ENCODE measurements at regions of chr11 and their contacts with region 1.

Region 1: GRCh38 chr11:13335319-13335718 is 57.7 kb downstream of the BMAL1 start:
- DNase-seq: peak; percentile 67
- ATAC-seq: no peak
- H3K4me3 ChIP-seq: no peak overlapping the region
- H3K27ac ChIP-seq: no peak overlapping the region
- H3K4me1 ChIP-seq: peaks cover 76% of the 10 kb centered on the region
- H3K27me3 ChIP-seq: no peaks in the 10 kb centered on the region
- CTCF ChIP-seq: peak; percentile 86

Region 2: GRCh38 chr11:13210424-13210823 is 124.9 kb before region 1 on chr11:
- CTCF ChIA-PET with region 1: interaction called, 11 read pairs
- POLR2A ChIA-PET with region 1: no interaction called
- intact Hi-C with region 1: no loop called
- DNase-seq: peak; percentile 82
- ATAC-seq: peak; percentile 78
- H3K4me3 ChIP-seq: no peak overlapping the region
- H3K27ac ChIP-seq: no peak overlapping the region
- H3K4me1 ChIP-seq: peaks cover 37% of the 10 kb centered on the region
- H3K27me3 ChIP-seq: no peaks in the 10 kb centered on the region
- CTCF ChIP-seq: peak; percentile 87

Region 3: DNA sequence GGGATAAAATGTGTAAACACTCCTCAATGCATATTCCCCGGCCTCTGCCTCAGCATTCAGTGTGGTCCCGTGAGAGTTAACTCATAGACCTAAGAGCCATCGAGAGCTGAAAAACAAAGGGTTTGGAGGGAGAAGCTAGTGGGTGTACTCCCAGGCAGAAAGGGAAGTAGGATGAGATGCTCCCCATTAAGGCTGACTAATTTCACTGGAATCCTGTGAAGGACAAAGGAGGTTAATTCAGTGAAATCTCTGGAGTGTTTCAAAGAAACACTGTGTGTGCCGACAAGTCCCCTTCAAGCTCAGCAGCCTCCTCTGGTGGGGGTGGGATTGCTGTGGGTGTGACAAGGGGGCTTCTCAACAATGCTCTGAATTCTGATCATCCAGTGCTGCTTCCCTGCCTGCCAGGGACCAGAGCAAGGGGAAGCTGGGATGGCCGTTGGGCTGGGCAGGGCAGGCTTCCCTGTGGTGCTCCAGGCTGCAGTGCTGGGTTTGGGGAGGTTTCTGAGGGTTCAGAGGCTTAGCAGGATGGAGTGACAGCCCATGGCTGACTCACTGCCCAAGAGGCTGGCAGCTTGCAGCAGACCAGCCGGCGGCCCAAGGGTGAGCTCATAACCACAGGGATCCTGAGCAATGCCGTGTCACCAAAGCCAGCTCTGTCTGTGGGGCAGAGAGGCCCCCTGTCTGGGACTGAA is 119.2 kb before region 1 on chr11:
- CTCF ChIA-PET with region 1: interaction called, 9 read pairs
- POLR2A ChIA-PET with region 1: interaction called, 7 read pairs
- intact Hi-C with region 1: loop called (anchors 2 kb)
- DNase-seq: peak; percentile 94
- ATAC-seq: peak; percentile 94
- H3K4me3 ChIP-seq: peak overlapping the region; percentile 48
- H3K27ac ChIP-seq: peak overlapping the region; percentile 99
- H3K4me1 ChIP-seq: peaks cover 42% of the 10 kb centered on the region
- H3K27me3 ChIP-seq: no peaks in the 10 kb centered on the region
- CTCF ChIP-seq: no peak

Region 4: GRCh38 chr11:13238879-13239514 is 96.3 kb before region 1 on chr11:
- CTCF ChIA-PET with region 1: no interaction called
- POLR2A ChIA-PET with region 1: no interaction called
- intact Hi-C with region 1: no loop called
- DNase-seq: peak; percentile 70
- ATAC-seq: peak; percentile 78
- H3K4me3 ChIP-seq: no peak overlapping the region
- H3K27ac ChIP-seq: no peak overlapping the region
- H3K4me1 ChIP-seq: peaks cover 12% of the 10 kb centered on the region
- H3K27me3 ChIP-seq: no peaks in the 10 kb centered on the region
- CTCF ChIP-seq: peak; percentile 94

Region 5: DNA sequence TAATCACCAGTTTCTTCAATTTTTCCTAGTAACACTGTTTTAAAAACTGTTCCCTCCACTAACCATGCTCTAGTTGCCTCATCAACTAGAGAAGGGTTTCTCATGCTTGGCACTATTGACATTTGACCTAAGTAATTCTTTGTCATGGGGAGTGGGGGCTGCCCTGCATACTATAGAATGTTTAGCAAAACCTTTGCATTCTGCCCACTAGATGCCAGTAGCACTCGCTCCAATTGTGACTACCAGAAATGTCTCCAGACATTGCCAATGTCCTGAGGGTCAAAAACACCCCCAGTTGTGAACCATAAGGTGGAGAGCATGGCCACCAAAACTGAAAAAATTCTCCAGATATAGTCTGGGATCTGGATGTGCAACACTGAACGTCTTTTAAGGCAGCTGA is 85.3 kb before region 1 on chr11:
- CTCF ChIA-PET with region 1: interaction called, 5 read pairs
- POLR2A ChIA-PET with region 1: no interaction called
- intact Hi-C with region 1: loop called (anchors 2 kb)
- DNase-seq: peak; percentile 48
- ATAC-seq: peak; percentile 75
- H3K4me3 ChIP-seq: no peak overlapping the region
- H3K27ac ChIP-seq: no peak overlapping the region
- H3K4me1 ChIP-seq: peaks cover 4% of the 10 kb centered on the region; the same call in 1 of the 2 replicates
- H3K27me3 ChIP-seq: no peaks in the 10 kb centered on the region
- CTCF ChIP-seq: peak; percentile 62

Region 6: GRCh38 chr11:13261591-13262061 is 73.7 kb before region 1 on chr11:
- CTCF ChIA-PET with region 1: interaction called, 3 read pairs
- POLR2A ChIA-PET with region 1: no interaction called
- intact Hi-C with region 1: loop called (anchors 2 kb)
- DNase-seq: peak; percentile 92
- ATAC-seq: peak; percentile 87
- H3K4me3 ChIP-seq: peak overlapping the region; percentile 31; the same call in 1 of the 2 replicates
- H3K27ac ChIP-seq: peak overlapping the region; percentile 85
- H3K4me1 ChIP-seq: peaks cover 27% of the 10 kb centered on the region
- H3K27me3 ChIP-seq: no peaks in the 10 kb centered on the region
- CTCF ChIP-seq: no peak

Region 7: DNA sequence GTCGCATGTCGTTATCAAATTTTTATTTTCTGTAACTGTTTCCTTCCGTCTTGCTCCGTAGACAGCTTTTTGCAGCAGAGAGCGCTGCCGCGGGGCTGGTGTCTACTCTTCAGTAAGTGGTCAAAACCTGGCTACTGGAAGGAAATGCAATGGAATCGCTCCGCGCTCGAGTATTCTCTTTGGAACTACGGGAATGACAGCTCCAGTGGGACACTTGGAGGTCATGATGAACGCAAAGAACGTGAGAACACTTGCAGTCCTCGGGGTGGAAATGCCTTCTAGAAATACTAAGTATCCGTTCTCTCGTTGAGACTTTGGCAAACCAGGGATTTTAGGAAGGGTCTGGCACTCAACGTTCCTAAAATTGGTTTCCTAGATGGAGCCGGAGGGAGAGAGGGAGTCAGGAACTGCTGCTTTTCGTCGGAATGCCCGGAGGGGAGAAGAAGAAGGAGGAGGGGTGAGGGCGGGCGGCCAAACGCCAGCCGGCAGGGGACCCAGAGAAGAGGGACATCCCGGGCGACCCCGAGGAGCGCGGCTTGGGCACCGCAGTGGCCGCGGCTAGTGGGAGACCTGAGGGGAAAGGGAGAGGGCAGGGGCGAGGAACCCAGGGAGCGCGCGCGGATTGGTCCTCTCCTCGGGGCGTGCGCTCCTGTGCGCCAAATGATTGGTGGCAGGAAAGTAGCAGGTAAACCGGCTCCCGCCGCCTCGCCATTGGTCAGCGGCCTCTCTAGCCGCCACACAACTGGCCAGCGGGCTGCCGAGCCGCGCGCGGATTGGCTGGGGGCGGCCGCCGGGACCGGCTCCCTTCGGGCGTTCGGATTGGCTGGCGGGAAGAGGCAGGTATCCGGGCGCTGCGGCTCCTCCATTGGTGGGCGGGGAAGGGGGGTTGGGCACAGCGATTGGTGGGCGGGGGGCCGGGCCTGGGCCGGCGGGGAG is 58.2 kb before region 1 on chr11:
- CTCF ChIA-PET with region 1: no interaction called
- POLR2A ChIA-PET with region 1: interaction called, 3 read pairs
- intact Hi-C with region 1: loop called (anchors 2 kb)
- DNase-seq: peak; percentile 96
- ATAC-seq: peak; percentile 93
- H3K4me3 ChIP-seq: peak overlapping the region; percentile 94
- H3K27ac ChIP-seq: no peak overlapping the region
- H3K4me1 ChIP-seq: no peaks in the 10 kb centered on the region
- H3K27me3 ChIP-seq: peaks cover 22% of the 10 kb centered on the region; the same call in 1 of the 2 replicates
- CTCF ChIP-seq: no peak

Region 8: DNA sequence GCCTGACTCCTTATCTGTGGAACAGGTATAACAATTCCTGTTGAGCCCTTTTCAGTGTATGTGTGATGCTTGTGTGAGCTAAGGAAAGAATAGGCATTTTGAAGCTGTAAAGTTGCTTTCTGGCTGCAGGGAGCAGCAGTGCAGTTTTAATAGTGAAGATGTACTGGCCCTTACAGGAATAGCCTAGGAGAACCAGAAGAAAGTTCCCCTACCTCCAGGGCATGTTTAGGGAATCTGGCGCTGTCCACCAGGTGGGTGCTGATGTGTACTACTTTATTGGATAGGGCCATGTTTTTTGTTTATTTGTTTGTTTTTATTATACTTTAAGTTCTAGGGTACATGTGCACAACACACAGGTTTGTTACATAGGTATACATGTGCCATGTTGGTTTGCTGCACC is 46.2 kb before region 1 on chr11:
- CTCF ChIA-PET with region 1: no interaction called
- POLR2A ChIA-PET with region 1: no interaction called
- intact Hi-C with region 1: loop called (anchors 2 kb)
- DNase-seq: peak; percentile 36
- ATAC-seq: peak; percentile 11; the same call in 1 of the 2 replicates
- H3K4me3 ChIP-seq: no peak overlapping the region
- H3K27ac ChIP-seq: no peak overlapping the region
- H3K4me1 ChIP-seq: peaks cover 22% of the 10 kb centered on the region
- H3K27me3 ChIP-seq: no peaks in the 10 kb centered on the region
- CTCF ChIP-seq: peak; percentile 26; the same call in 1 of the 2 replicates

Measured in PC-3 (cell line).